AG04449 (cell line): ENCODE measurements at regions of chr15 and their contacts with region 1.

Region 1: DNA sequence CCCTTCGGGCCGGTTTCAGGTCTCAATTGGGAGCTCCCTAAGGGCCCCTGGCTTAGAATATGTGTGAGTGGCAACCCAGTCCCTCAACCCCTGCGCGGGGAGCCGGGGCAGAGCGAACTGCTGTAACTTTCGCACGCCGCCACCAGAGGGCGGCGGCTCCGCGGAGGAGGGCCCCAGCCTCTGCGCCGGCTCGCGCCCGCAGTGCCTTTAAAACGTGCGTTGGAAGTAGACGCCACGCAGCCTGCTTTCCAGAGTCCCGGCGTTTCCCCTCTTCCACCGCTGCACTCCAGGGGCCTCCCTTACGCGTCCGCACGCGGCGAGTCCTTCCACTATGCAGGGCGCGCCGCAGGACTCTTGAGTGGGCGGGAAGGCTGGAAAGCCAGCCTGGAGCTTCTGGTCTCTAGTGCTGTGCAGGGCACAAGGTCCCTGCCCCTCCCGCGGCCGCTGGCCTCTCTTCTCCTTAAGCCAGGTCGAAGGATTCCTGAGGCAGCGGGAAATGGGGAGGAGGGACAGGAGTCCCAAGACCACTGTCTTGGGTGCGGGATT is 23.7 kb upstream of the RNU6-1 start:
- DNase-seq: no peak
- H3K4me3 ChIP-seq: peak overlapping the region; percentile 51
- CTCF ChIP-seq: peak; percentile 92

Region 2: GRCh38 chr15:67873777-67874176 is 10.3 kb after region 1 on chr15:
- CTCF ChIA-PET with region 1: interaction called, 15 read pairs
- POLR2A ChIA-PET with region 1: no interaction called
- DNase-seq: no peak
- H3K4me3 ChIP-seq: no peak overlapping the region
- CTCF ChIP-seq: no peak

Region 3: DNA sequence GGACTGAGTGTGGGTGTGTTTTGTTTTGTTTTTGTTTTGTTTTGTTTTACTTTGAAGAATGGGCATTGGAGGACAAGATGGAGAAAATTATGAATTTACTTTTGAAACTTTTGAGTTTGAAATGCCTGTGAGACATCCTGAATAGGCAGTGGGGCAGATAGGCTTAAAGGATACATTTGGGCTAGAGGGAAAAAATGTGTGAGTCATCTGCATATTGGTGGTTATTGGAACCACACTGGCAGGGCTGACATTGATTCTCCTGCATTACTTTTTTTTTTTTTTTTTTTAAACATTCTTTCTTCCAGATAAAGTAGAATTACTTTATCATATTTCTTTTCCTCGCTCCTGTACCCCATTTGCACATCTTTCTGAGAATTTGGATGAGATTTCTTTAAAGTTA is 285.5 kb after region 1 on chr15:
- CTCF ChIA-PET with region 1: interaction called, 212 read pairs
- POLR2A ChIA-PET with region 1: no interaction called
- DNase-seq: no peak
- H3K4me3 ChIP-seq: no peak overlapping the region
- CTCF ChIP-seq: no peak

Region 4: GRCh38 chr15:68175526-68175925 is 312.0 kb after region 1 on chr15:
- CTCF ChIA-PET with region 1: interaction called, 16 read pairs
- POLR2A ChIA-PET with region 1: no interaction called
- DNase-seq: no peak
- H3K4me3 ChIP-seq: no peak overlapping the region
- CTCF ChIP-seq: no peak

Region 5: DNA sequence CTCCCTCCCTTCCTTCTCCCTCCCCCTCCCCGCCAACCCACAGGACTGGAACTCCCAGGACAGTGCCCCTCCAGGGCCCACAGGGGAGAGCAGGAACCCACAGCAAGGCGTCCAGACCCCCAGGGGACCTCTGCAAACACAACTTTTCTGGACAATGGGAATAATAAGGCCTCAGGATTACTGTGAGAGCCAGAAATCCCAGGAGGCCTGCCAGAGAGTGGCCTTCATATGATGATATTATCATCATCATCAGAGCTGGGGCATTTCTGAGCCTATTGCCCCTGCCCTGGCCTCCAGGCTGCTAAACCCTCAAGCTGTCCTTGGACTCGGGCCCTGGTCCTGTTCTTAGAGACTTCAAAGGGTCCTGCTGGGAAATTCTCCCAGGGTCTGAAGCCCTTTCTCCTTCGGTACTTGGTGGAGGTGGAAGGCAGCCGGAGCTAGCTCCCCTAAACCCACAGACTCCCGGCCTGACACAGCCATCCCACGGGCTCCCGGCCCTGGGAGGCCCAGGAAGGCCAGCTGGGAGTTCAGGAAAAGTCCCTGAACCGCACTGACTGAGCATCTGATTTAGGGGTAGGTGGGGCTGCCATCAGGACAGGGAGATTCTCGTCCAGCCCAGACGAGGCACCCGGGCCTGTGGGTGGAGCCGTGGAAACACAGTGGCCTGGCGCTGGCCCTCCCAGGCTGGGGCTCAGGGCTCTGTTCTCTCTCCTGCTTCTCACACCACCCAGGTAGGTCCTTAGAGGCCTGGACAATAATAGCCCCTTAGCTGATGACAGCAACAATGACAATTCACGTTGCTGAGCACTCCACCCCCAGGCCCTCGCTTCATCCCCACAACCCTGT is 336.7 kb after region 1 on chr15:
- CTCF ChIA-PET with region 1: interaction called, 21 read pairs
- POLR2A ChIA-PET with region 1: no interaction called
- DNase-seq: no peak
- H3K4me3 ChIP-seq: no peak overlapping the region
- CTCF ChIP-seq: no peak